Ascending aorta (tissue), 2 donors: ENCODE measurements at regions of chr14 and their contacts with region 1.

Region 1: GRCh38 chr14:75720842-75721498 is 59.9 kb downstream of the TTLL5 start:
- DNase-seq: peak in 1 of 2 donors; percentile 85
- H3K4me3 ChIP-seq: peak overlapping the region in 1 of 2 donors; percentile 29
- H3K27ac ChIP-seq: peak overlapping the region; percentile 30 to 56
- H3K4me1 ChIP-seq: peaks cover 6 to 24% of the 10 kb centered on the region in 2 donors
- H3K27me3 ChIP-seq: no peaks in the 10 kb centered on the region
- CTCF ChIP-seq: no peak

Region 2: GRCh38 chr14:75333606-75334548 is 387.1 kb before region 1 on chr14:
- intact Hi-C with region 1: no loop called
- DNase-seq: peak; percentile 23 to 82
- H3K4me3 ChIP-seq: no peak overlapping the region
- H3K27ac ChIP-seq: peak overlapping the region; percentile 25 to 64
- H3K4me1 ChIP-seq: no peaks in the 10 kb centered on the region
- H3K27me3 ChIP-seq: no peaks in the 10 kb centered on the region
- CTCF ChIP-seq: no peak

Region 3: GRCh38 chr14:75769047-75769685 is 48.2 kb after region 1 on chr14:
- intact Hi-C with region 1: loop called (anchors 5 kb)
- DNase-seq: no peak
- H3K4me3 ChIP-seq: no peak overlapping the region
- H3K27ac ChIP-seq: peak overlapping the region in 1 of 2 donors; percentile 36
- H3K4me1 ChIP-seq: peaks cover 0 to 2% of the 10 kb centered on the region in 2 donors
- H3K27me3 ChIP-seq: no peaks in the 10 kb centered on the region
- CTCF ChIP-seq: no peak

Region 4: DNA sequence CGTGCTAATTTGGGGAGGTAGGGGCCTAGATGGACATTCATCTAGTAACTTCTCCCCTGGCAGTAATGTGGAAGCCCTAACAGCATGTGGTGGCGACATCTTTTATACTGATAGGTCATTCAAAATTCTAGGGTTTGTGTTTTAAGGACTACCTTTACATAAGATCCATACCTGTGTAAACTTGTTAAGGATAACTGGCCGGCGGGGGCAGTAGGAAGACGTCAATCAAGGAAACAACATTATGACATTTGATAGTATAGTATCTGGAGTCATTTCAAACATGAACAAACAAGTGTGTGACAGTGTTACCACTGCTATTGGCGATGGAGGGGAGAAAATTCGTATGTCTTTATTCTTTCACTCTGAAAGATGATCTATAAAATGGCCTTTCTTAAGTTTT is 60.1 kb after region 1 on chr14:
- intact Hi-C with region 1: no loop called
- DNase-seq: no peak
- H3K4me3 ChIP-seq: no peak overlapping the region
- H3K27ac ChIP-seq: no peak overlapping the region
- H3K4me1 ChIP-seq: no peaks in the 10 kb centered on the region
- H3K27me3 ChIP-seq: no peaks in the 10 kb centered on the region
- CTCF ChIP-seq: no peak

Region 5: DNA sequence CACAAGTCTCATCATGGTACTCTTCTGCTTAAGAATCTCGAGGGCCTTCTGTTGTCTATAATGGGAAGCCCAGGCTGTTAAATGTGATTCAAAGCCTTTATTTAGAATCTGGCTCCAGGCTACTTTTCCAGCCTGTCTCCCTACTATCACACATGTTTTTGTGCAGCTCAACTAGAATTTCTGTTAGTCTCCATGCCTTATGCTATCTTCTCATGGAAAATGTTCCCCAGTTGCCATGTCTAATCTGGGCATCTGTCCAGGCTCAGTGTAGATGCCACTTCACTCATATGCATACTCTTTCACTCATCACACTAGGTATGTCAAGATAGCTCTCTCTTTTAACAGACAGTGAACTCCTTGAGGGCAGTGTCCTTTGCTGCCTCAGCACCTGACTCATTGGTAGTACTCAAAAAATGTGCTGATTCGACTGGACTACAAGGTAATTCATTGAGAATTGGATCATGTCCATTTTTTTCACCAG is 85.4 kb after region 1 on chr14:
- intact Hi-C with region 1: loop called (anchors 5 kb)
- DNase-seq: no peak
- H3K4me3 ChIP-seq: no peak overlapping the region
- H3K27ac ChIP-seq: peak overlapping the region in 1 of 2 donors; percentile 57
- H3K4me1 ChIP-seq: peaks cover 0 to 8% of the 10 kb centered on the region in 2 donors
- H3K27me3 ChIP-seq: no peaks in the 10 kb centered on the region
- CTCF ChIP-seq: no peak